ENCODE measurements at regions of chr10 and their contacts with region 1.

Region 1: DNA sequence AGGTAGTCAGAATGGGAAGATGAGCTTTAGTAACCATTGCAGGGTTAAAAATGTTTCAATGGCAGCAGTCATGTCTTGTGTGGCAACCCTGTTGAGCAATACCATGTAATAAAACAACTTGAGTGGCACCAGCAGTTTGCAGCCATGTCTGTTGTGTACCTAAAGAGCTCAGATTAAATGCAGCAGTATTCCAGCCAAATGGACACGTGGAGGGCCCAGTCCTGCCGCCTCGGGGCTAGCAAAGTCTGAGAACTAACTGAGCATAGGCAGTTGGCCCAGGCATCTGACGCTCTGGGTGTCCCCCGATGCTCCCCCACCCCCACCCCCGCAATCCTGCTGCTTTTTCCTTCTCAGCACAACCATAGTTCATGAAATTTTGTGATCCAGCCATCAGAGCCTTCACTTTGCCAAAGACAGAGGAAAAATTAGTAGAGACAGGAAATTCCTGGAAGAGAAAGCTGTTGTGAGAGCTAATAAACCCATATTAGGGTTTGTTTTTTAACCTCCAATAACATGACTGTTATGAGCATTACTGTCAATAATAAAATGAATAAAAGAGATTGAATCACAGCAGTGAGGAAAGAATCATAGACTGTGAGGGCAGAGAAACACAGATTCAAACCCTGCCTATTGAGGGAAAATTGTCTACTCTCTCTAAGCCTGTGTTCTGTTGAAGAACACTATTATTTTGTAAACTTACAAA is 220.6 kb upstream of the RHOBTB1 start:
- DNase-seq: peak; percentile 93
- H3K4me3 ChIP-seq: peak overlapping the region in 1 of 2 donors; percentile 3
- H3K27ac ChIP-seq: peak overlapping the region; percentile 56 to 74
- H3K4me1 ChIP-seq: no peaks in the 10 kb centered on the region
- H3K27me3 ChIP-seq: no peaks in the 10 kb centered on the region
- CTCF ChIP-seq: no peak
- POLR2A ChIP-seq: no peak

Region 2: DNA sequence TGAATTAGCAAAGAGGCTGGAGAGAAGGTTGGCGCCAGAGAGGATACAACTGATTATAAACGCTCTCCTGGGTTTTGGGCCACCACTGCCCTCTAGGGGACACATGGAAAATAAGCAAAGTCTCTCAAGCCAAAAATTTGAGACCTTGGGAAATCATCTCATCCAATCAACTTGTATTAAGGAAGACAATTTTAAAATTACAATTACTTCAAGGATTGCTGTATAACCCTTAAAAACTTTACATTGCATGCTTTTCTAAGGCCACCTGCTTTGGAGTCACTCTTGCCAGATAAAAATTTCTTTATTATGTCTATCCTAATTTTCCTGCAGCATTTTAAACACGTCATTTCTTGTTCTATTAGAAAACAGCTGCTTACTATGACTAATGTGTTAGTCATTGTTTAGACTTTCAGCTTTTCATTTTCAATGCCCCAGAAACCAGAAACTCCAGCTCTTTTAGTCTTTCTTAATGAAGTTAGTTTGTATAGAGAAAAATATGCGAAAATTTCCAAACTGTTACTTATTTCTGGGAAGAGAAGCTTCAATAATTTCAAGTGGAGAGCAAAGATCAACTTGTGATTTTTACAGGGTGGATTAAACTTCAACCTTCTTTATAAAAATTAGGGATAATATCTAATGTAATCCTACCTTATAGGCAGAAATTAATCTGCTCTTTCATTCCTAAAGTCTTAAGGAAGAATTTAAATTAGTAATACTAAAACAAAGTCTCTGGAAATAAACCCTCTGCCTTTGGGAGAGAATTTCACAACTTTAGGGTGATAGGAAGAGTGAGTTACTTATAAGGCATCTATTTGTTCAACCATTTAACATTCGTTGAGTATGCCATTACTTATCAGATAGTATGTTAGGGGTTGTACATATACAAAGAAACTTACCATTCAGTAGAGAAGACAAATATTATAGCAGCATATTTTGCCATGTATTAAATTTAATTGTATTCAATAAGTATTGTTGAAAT is 200.1 kb before region 1 on chr10:
- intact Hi-C with region 1: loop called (anchors 10 kb)
- DNase-seq: peak; percentile 61
- H3K4me3 ChIP-seq: no peak overlapping the region
- H3K27ac ChIP-seq: peak overlapping the region in 1 of 2 donors; percentile 16
- H3K4me1 ChIP-seq: peaks cover 4% of the 10 kb centered on the region
- H3K27me3 ChIP-seq: no peaks in the 10 kb centered on the region
- CTCF ChIP-seq: peak; percentile 46 to 76 (median 72)
- POLR2A ChIP-seq: no peak

Region 3: DNA sequence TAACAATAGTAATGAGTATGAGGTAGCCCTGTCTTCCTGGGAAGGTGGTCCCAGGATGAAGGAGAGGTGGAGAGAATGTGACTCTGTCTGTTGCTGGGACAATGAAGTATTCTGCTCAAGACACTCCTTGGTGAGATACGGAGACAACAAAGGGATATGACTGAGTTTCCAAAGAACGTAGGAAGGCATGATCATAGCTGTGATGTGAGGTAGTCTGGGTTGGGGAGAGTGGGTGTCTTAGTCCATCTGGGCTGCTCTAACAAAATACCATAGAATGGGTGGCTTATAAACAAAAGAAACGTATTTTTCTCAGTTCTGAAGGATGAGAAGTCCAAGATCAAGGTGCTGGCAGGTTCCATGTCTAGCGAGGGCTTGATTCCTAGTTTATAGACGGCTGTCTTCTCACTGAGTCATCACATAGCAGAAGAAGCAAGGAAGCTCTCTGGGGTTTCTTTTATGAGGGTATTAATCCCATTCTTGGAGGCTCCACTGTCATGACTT is 135.7 kb before region 1 on chr10:
- intact Hi-C with region 1: no loop called
- DNase-seq: no peak
- H3K4me3 ChIP-seq: no peak overlapping the region
- H3K27ac ChIP-seq: no peak overlapping the region
- H3K4me1 ChIP-seq: no peaks in the 10 kb centered on the region
- H3K27me3 ChIP-seq: no peaks in the 10 kb centered on the region
- CTCF ChIP-seq: no peak
- POLR2A ChIP-seq: no peak